ENCODE measurements at regions of chr6 and their contacts with region 1.

Region 1: DNA sequence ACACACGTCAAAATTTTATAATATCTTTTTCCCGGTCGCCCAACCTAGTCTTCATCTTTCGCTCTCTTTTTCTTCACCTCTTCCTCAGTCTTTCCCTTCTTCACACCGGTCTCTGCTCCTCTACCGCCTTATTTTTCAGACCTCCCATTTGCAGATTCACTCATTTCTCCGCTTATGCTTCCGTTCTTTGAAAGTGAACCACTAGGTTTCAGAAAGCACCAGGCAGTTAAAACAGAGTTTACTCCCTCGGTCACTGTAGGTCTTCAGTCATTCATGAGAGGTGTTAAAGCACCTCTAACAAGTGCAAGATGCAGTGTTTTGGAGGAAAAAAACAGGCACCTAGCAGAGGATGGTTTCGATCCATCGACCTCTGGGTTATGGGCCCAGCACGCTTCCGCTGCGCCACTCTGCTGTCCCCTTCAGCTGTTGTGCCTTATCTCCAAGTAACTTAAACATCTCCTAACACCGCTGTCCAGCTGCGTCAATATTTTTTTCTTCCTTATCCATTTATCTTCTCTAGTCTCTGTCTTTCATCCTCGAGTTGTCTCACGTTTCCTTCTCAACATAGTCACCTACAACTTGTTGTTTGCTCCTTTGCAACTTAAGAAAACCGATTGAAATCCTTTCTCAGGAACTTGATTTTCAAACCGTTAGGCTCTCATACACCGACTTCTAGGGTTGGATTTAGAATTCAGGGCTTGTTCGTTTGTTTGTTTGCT is 119.7 kb upstream of the ZNF184 start:
- DNase-seq: peak; percentile 55
- H3K4me3 Mint-ChIP-seq: no peak overlapping the region
- H3K27ac Mint-ChIP-seq: no peak overlapping the region
- H3K4me1 Mint-ChIP-seq: peaks cover 1% of the 10 kb centered on the region
- H3K27me3 Mint-ChIP-seq: peaks cover 25% of the 10 kb centered on the region

Region 2: DNA sequence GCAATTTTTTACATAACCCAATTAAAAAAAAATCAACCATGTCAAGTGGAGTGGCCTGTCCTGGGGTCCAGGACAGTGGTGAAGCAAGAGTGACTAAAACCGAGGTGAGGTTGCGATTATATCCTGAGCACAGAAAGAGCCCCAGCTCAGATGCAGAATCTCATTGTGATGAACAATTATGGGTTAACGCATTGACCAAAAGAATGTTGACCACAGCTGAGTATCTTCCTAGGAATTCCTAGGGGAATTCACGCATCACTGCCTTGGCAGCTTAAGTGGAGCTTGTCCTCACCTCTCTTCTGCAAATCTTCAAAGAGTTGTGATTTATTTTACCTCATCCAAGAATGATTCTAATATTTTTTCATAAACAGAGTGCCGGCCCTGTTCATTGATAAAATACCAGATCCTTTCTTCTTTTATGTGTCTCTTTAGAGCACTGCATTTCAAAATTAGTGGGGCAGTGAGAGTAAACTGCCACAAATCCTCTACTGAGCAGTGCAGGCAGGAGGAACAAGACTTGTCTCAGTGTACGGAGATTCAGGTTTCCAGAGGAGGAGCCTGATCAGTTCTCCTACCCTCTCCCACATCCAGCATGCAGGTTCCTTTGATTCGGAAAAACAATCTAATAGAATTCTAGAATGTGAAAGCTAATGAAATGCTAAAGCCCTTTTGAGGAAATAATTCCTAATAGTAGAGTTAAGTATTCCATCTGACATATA is 59.7 kb before region 1 on chr6:
- intact Hi-C with region 1: no loop called
- DNase-seq: no peak
- H3K4me3 Mint-ChIP-seq: no peak overlapping the region
- H3K27ac Mint-ChIP-seq: no peak overlapping the region
- H3K4me1 Mint-ChIP-seq: no peaks in the 10 kb centered on the region
- H3K27me3 Mint-ChIP-seq: peaks cover 31% of the 10 kb centered on the region

Region 3: GRCh38 chr6:27687154-27688013 is 94.7 kb after region 1 on chr6:
- intact Hi-C with region 1: loop called (anchors 2 kb)
- DNase-seq: peak; percentile 73
- H3K4me3 Mint-ChIP-seq: peak overlapping the region; percentile 88
- H3K27ac Mint-ChIP-seq: peak overlapping the region; percentile 68
- H3K4me1 Mint-ChIP-seq: peaks cover 16% of the 10 kb centered on the region
- H3K27me3 Mint-ChIP-seq: peaks cover 17% of the 10 kb centered on the region

Measured in activated T-helper 2 cell treated with anti-CD3 and anti-CD28 coated beads, Interferon-gamma antibody, Interleukin-2, Interleukin-4, amounts not matched to agents 10 μg/mL and 5 μg/mL and 100 μg/mL, durations not matched to agents 14 hours and 24 hours and 36 hours (primary cell).